ENCODE measurements at regions of chr11 and their contacts with region 1.

Region 1: GRCh38 chr11:44095506-44096394 is at the start of gene EXT2:
- DNase-seq: peak; percentile 84 to 92
- H3K4me3 ChIP-seq: peak within 1 kb of the TSS; percentile 95
- H3K4me3 Mint-ChIP-seq: peak within 1 kb of the TSS; percentile 94
- H3K27ac Mint-ChIP-seq: peak within 1 kb of the TSS; percentile 83
- H3K4me1 ChIP-seq: peaks cover 6% of the 10 kb centered on the region; the same call in 1 of the 2 replicates
- H3K4me1 Mint-ChIP-seq: peaks cover 18% of the 10 kb centered on the region
- H3K27me3 ChIP-seq: no peaks in the 10 kb centered on the region
- H3K27me3 Mint-ChIP-seq: peaks cover 3% of the 10 kb centered on the region
- CTCF ChIP-seq: peak; percentile 76 to 97
- total RNA-seq, gene EXT2: 71.5 and 83.3 TPM in 2 replicates

Region 2: DNA sequence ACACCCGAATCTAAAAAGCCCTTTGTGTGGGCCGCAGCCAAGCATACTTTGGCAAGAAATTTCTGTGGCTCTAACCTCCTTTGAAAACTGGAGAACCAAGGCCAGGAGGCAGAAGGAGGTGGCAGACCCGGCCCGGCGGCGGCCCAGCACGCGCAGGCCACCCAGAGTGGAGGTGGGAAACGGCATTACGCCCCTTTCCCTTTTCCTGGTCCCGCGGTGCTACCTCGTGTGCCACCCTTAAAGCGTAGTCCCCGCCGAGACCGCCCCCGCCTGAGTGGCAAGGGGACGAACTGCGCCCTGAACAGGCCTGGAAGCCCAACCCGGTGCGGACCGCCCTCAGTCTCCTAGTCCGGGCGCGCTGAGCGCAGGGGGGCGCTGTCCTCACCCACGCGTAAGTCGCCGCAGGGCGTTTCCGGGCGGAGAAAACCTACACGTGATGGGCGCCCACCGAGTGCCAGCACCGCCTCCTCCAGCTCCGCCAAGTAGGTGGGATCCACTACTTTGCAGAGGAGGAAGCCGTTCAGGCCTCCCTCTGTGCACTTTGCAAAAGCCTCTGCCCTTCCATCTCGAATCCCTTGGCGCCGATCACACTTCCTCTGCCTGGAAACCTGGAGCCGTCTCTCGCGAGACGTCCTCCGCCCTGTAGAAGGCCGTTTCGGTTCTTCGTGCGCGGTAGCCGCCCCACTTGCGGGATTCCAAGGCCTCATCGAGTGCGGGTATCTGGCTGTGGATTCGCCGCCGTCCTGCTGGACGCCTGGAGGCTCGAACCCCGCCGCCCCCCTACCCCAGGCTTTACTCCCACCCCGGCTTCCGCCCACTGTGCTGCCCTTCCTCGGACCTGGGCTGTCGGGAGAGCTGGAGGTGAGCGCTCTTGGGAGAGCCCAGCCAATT is 29.7 kb before region 1 on chr11 and contains the start of gene ACCS:
- CTCF ChIA-PET with region 1: interaction called, 6 read pairs
- POLR2A ChIA-PET with region 1: interaction called, 4 read pairs
- intact Hi-C with region 1: loop called (anchors 2 kb)
- DNase-seq: peak; percentile 92 to 95
- H3K4me3 ChIP-seq: peak within 1 kb of the TSS; percentile 45
- H3K4me3 Mint-ChIP-seq: peak within 1 kb of the TSS; percentile 81
- H3K27ac Mint-ChIP-seq: peak within 1 kb of the TSS; percentile 90
- H3K4me1 ChIP-seq: peaks cover 4% of the 10 kb centered on the region
- H3K4me1 Mint-ChIP-seq: no peaks in the 10 kb centered on the region
- H3K27me3 ChIP-seq: no peaks in the 10 kb centered on the region
- H3K27me3 Mint-ChIP-seq: peaks cover 14% of the 10 kb centered on the region
- CTCF ChIP-seq: peak; percentile 91 to 92
- total RNA-seq, gene ACCS: 19.5 and 24.7 TPM in 2 replicates

Region 3: GRCh38 chr11:44110231-44110679 is 14.5 kb after region 1 on chr11:
- CTCF ChIA-PET with region 1: interaction called, 34 read pairs
- POLR2A ChIA-PET with region 1: no interaction called
- intact Hi-C with region 1: loop called (anchors 1 kb)
- DNase-seq: peak; percentile 59 to 71
- H3K4me3 ChIP-seq: no peak overlapping the region
- H3K4me3 Mint-ChIP-seq: no peak overlapping the region
- H3K27ac Mint-ChIP-seq: no peak overlapping the region
- H3K4me1 ChIP-seq: no peaks in the 10 kb centered on the region
- H3K4me1 Mint-ChIP-seq: no peaks in the 10 kb centered on the region
- H3K27me3 ChIP-seq: no peaks in the 10 kb centered on the region
- H3K27me3 Mint-ChIP-seq: no peaks in the 10 kb centered on the region
- CTCF ChIP-seq: peak; percentile 72 to 89

Region 4: GRCh38 chr11:44326615-44327475 is 231.1 kb after region 1 on chr11:
- CTCF ChIA-PET with region 1: interaction called, 9 read pairs
- POLR2A ChIA-PET with region 1: no interaction called
- intact Hi-C with region 1: loop called (anchors 1 kb)
- DNase-seq: peak; percentile 35 to 47
- H3K4me3 ChIP-seq: no peak overlapping the region
- H3K4me3 Mint-ChIP-seq: no peak overlapping the region
- H3K27ac Mint-ChIP-seq: no peak overlapping the region
- H3K4me1 ChIP-seq: 0 out of 2 replicates have a peak, but pooled peaks cover 5% of the 10 kb centered on the region
- H3K4me1 Mint-ChIP-seq: peaks cover 8% of the 10 kb centered on the region
- H3K27me3 ChIP-seq: no peaks in the 10 kb centered on the region
- H3K27me3 Mint-ChIP-seq: peaks cover 3% of the 10 kb centered on the region
- CTCF ChIP-seq: peak in 1 of 2 experiments; percentile 45